ENCODE measurements at regions of chr1 and their contacts with region 1.

Region 1: GRCh38 chr1:11661103-11661502 is 2.9 kb upstream of the FBXO6 start:
- DNase-seq: no peak
- H3K4me3 ChIP-seq: no peak overlapping the region
- H3K27ac ChIP-seq: no peak overlapping the region
- H3K4me1 ChIP-seq: no peaks in the 10 kb centered on the region; a peak in 1 of 4 replicates
- H3K27me3 ChIP-seq: no peaks in the 10 kb centered on the region
- CTCF ChIP-seq: no peak
- EP300 ChIP-seq: no peak
- RAD21 ChIP-seq: no peak

Region 2: DNA sequence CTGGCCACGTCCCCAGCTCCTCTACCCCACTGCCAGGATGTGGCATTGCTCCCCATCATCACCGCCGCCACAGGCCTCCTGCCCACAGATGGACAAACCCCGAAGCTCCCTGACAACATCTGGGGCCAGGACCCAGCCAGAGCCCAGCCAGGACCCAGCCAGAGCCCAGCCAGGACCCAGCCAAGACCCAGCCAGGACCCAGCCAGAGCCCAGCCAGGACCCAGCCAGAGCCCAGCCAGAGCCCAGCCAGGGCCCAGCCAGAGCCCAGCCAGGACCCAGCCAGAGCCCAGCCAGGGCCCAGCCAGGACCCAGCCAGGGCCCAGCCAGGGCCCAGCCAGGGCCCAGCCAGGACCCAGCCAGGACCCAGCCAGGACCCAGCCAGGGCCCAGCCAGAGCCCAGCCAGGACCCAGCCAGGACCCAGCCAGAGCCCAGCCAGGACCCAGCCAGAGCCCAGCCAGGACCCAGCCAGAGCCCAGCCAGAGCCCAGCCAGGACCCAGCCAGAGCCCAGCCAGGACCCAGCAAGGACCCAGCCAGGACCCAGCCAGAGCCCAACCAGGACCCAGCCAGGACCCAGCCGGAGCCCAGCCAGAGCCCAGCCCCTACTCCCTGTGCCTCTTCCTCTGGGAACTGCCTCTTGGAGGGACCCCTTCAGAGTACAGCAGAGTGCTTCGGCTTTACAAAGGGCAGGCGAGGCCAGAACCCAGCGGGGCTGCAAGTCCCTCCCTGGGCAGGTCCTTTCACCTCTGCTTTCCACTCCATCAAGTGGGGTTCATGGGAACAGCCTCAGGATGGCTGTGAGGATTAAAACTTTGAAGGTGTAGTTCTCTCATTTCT is 138.5 kb before region 1 on chr1:
- CTCF ChIA-PET with region 1: no interaction called
- POLR2A ChIA-PET with region 1: no interaction called
- DNase-seq: no peak
- H3K4me3 ChIP-seq: no peak overlapping the region
- H3K27ac ChIP-seq: no peak overlapping the region; a peak in 1 of 4 replicates
- H3K4me1 ChIP-seq: peaks cover 0 to 20% of the 10 kb centered on the region in 2 experiments; a peak in 1 of 4 replicates
- H3K27me3 ChIP-seq: no peaks in the 10 kb centered on the region
- CTCF ChIP-seq: no peak
- EP300 ChIP-seq: no peak
- RAD21 ChIP-seq: no peak

Region 3: DNA sequence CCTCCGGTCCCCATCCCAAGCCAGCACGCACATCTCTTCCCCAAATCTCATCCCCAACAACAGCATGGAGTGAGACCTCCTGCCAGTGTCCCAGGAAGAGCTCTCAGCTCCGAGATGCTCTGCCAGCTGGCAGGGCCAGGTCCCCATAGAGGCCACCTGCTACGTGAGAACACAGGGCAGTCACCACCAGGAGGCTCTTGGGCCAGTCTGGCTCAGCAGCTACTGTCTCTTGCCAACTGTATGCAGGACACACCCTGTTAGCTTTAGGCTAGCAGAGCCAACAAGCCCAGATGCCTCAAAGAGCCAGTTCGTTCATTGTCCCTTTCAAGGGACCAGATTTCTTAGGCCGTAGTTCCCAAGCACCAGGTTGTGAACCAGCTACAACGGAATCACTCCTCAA is 43.8 kb before region 1 on chr1:
- CTCF ChIA-PET with region 1: no interaction called
- POLR2A ChIA-PET with region 1: no interaction called
- DNase-seq: no peak
- H3K4me3 ChIP-seq: no peak overlapping the region
- H3K27ac ChIP-seq: no peak overlapping the region
- H3K4me1 ChIP-seq: peaks cover 0 to 6% of the 10 kb centered on the region in 2 experiments; a peak in 1 of 4 replicates
- H3K27me3 ChIP-seq: no peaks in the 10 kb centered on the region
- CTCF ChIP-seq: no peak
- EP300 ChIP-seq: no peak
- RAD21 ChIP-seq: no peak

Region 4: GRCh38 chr1:11693024-11693590 is 32.0 kb after region 1 on chr1:
- CTCF ChIA-PET with region 1: interaction called, 13 read pairs
- POLR2A ChIA-PET with region 1: no interaction called
- DNase-seq: no peak
- H3K4me3 ChIP-seq: no peak overlapping the region
- H3K27ac ChIP-seq: peak overlapping the region in 1 of 2 experiments; percentile 13; a peak in 1 of 4 replicates
- H3K4me1 ChIP-seq: peaks cover 6 to 15% of the 10 kb centered on the region in 2 experiments; a peak in 3 of 4 replicates
- H3K27me3 ChIP-seq: peaks cover 14% of the 10 kb centered on the region
- CTCF ChIP-seq: no peak
- EP300 ChIP-seq: no peak
- RAD21 ChIP-seq: no peak

Region 5: DNA sequence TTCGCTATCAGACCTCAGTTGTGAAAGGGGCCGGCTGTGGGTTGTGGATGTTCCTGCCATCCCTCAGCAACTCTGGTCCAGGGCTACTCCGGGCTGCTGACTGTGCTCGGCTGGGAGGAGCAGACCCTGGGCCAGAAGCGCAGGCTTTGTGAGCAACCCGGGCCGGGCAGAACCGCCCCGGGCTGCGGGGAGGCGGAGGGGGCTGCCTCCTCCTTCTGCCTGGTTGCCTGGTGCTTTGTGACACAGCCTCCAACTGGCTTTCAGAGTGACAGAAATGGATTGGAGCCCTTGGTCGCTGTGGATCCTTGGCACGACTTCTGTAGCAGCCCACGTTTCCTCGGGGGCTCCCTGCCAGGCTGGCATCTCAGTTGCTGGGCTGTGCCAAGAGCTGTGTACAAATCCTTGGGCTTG is 40.5 kb after region 1 on chr1:
- CTCF ChIA-PET with region 1: interaction called, 39 read pairs
- POLR2A ChIA-PET with region 1: interaction called, 3 read pairs
- DNase-seq: peak; percentile 75
- H3K4me3 ChIP-seq: no peak overlapping the region
- H3K27ac ChIP-seq: no peak overlapping the region
- H3K4me1 ChIP-seq: peaks cover 0 to 9% of the 10 kb centered on the region in 2 experiments; a peak in 1 of 4 replicates
- H3K27me3 ChIP-seq: no peaks in the 10 kb centered on the region; the same call in 1 of the 2 replicates
- CTCF ChIP-seq: no peak
- EP300 ChIP-seq: no peak
- RAD21 ChIP-seq: no peak

Measured in SK-N-SH (cell line).